Stomach (tissue), 19 donors: ENCODE measurements at regions of chr2 and their contacts with region 1.

Region 1: DNA sequence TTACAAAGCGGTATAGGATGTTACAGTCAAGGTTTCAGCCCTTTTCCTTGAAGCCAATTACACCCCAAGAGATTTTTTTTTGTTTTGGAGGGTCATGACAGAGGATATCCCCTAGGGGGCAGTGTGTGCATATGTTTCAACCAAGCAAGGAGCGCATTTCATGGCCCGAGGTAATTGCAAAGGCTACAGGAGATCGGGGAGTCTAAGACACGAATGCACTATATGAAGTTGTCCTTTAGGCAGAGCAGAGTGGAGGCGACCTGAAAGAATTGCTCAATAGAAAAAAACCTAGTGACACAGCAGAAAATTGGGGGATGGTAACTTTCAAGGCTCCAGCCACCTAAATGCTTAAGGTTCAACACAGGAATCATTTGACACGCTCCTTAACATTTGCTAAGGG is 219.8 kb upstream of the PARD3B start:
- DNase-seq: peak; percentile 64 to 92
- H3K4me3 ChIP-seq: no peak overlapping the region
- H3K27ac ChIP-seq: no peak overlapping the region
- H3K4me1 ChIP-seq: peaks cover 0 to 12% (median 6%) of the 10 kb centered on the region in 4 donors
- H3K27me3 ChIP-seq: no peaks in the 10 kb centered on the region
- CTCF ChIP-seq: peak in 6 of 7 experiments; percentile 38 to 86 (median 82)
- EP300 ChIP-seq: no peak
- POLR2A ChIP-seq: no peak

Region 2: GRCh38 chr2:204655131-204655530 is 329.7 kb after region 1 on chr2:
- intact Hi-C with region 1: no loop called
- DNase-seq: no peak
- H3K4me3 ChIP-seq: no peak overlapping the region
- H3K27ac ChIP-seq: peak overlapping the region in 1 of 5 donors; percentile 26
- H3K4me1 ChIP-seq: peaks cover 0 to 19% (median 2%) of the 10 kb centered on the region in 4 donors
- H3K27me3 ChIP-seq: no peaks in the 10 kb centered on the region
- CTCF ChIP-seq: no peak
- EP300 ChIP-seq: no peak
- POLR2A ChIP-seq: no peak

Region 3: DNA sequence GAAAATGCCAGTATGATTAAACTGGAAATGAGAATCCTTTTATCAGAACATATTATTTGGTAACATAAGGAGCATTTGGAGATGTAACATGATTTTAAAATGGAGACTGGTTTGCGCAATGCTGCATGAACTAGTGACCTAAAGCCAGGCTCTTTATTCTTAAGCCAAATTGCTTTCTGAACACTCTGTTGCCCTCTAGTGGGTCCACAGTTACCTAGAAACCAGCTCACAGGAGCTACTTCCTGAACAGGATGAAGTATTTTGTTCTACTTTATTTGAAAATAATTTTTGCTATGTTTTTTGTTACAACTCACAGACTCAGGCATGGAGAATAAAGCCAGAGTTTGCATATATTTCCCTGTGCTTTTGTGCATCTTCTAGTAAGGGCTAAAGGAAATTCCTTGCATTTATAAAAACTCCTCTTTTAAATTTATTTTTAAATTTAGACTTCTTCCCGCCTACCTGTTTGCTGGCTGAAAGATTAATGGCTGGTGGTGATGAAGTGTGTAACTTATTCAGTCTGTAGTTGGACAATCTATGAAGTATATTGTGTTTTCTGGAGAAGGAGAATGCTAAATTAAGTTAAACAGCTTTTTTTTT is 366.5 kb after region 1 on chr2:
- intact Hi-C with region 1: loop called (anchors 10 kb)
- DNase-seq: peak; percentile 49 to 92
- H3K4me3 ChIP-seq: no peak overlapping the region
- H3K27ac ChIP-seq: no peak overlapping the region
- H3K4me1 ChIP-seq: peaks cover 0 to 25% (median 10%) of the 10 kb centered on the region in 4 donors
- H3K27me3 ChIP-seq: no peaks in the 10 kb centered on the region
- CTCF ChIP-seq: peak in 5 of 7 experiments; percentile 48 to 66 (median 56)
- EP300 ChIP-seq: no peak
- POLR2A ChIP-seq: no peak

Region 4: DNA sequence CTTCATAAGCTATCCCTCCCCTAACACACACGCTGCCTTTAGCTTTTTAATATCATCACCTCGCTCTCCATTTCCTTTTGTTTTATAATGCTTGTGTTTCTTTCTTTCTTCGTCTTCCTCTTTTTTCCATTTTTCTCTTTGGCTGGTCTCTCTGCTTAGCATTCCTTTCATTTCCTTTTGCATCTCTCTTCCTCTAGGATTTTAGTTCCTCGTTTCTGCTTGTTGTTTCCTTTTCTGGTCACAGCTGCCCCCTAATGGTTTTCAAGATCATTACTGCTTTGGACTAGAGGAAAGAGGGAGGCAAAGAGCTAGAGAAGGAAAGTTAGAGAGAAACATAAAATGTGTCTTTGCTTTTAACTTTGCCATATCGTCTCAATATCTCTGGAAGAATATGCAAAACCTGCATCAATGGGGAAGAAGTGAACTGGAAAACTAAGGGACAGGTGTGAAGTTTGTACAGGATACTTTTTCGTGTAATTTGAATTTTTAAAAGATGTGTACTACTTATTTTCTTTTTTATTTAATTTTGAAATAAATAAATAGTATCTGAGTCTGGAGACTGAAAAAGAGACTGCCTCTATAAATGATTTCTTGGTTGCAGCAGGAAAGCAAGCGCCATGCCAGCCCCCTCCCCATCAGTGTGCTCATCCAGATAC is 1350.5 kb after region 1 on chr2:
- intact Hi-C with region 1: loop called (anchors 10 kb)
- DNase-seq: peak in 1 of 2 donors; percentile 88
- H3K4me3 ChIP-seq: no peak overlapping the region
- H3K27ac ChIP-seq: no peak overlapping the region
- H3K4me1 ChIP-seq: peaks cover 8 to 21% (median 11%) of the 10 kb centered on the region in 4 donors
- H3K27me3 ChIP-seq: no peaks in the 10 kb centered on the region
- CTCF ChIP-seq: peak in 5 of 7 experiments; percentile 63 to 90 (median 74)
- EP300 ChIP-seq: no peak
- POLR2A ChIP-seq: no peak